ENCODE measurements at regions of chr10 and their contacts with region 1.

Region 1: DNA sequence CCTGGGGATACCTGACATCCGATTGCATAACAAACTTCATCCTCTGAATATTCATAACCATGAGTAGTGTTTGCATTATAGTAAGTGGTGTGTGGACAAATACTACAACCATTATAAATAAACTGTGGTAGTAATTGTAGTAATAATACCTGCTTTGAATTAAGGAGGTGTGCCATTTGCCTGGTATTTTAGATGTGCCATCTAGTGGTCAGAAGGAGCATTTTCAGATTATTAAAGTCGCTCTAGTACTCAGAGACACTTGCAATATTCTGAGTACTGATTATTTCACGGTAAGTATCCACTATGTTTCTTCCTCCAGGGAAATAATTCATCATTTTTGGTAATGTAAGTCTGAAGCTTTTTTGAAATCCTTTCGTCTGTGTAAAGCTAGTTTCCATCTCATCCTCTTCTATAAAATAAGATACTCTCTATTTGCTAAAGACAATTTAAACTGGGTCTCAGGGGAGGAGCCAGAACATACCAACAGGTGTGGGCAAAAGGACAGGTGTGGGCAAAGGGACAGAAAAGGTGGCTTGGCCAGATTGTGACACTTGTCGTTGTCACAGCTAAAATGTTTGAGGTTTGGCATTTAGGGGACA is 115.3 kb upstream of the WDR11 start:
- DNase-seq: peak; percentile 29
- H3K4me3 ChIP-seq: no peak overlapping the region
- H3K27ac ChIP-seq: no peak overlapping the region
- H3K4me1 ChIP-seq: no peaks in the 10 kb centered on the region
- H3K27me3 ChIP-seq: peaks cover 33% of the 10 kb centered on the region
- CTCF ChIP-seq: peak; percentile 75

Region 2: GRCh38 chr10:120423431-120424197 is 312.3 kb before region 1 on chr10:
- CTCF ChIA-PET with region 1: no interaction called
- POLR2A ChIA-PET with region 1: no interaction called
- intact Hi-C with region 1: loop called (anchors 10 kb)
- DNase-seq: peak; percentile 55
- H3K4me3 ChIP-seq: no peak overlapping the region
- H3K27ac ChIP-seq: no peak overlapping the region
- H3K4me1 ChIP-seq: no peaks in the 10 kb centered on the region
- H3K27me3 ChIP-seq: peaks cover 21% of the 10 kb centered on the region
- CTCF ChIP-seq: peak; percentile 93

Region 3: DNA sequence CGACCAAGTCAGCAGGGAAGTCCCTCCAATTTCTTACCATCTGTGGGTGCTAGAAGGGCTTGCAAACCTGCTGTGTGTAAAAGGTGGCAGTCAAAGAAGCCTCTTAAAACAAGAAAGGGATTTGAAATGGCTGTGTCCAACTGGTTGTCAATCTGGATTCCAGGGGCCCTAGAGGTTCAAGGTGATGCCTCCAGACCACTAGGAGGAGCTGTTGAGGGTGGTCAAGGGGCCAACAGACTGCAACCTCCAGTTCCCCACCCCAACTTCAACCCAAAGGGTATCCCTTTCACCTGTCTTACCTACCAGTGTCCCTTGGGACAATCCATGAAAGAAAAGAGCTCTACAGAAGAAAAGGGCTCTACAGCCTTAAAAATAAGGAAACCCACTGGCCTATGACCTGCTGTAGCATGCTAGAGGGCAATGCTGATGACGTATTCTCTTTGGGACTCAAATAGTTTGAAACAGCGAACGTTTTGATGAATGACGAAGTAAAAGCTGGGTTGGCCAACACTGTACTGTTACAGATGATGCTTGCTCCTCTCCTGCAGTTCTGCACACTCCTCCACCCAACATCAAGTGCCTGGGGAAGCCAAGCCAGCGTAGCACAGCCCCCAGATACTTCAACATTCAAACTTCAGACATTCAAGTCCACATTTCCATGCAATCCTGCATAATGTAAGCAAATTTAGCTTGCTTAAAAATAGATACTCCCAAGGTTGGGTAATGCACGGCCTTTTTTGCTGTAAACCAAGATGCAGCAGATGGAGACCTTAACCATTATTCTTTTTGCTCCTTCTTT is 69.3 kb after region 1 on chr10:
- CTCF ChIA-PET with region 1: no interaction called
- POLR2A ChIA-PET with region 1: no interaction called
- intact Hi-C with region 1: no loop called
- DNase-seq: no peak
- H3K4me3 ChIP-seq: no peak overlapping the region
- H3K27ac ChIP-seq: no peak overlapping the region
- H3K4me1 ChIP-seq: no peaks in the 10 kb centered on the region
- H3K27me3 ChIP-seq: peaks cover 89% of the 10 kb centered on the region
- CTCF ChIP-seq: peak; percentile 26; the same call in 1 of the 2 replicates

Measured in A673 (cell line).